Left colon (tissue), 2 donors: ENCODE measurements at regions of chr2 and their contacts with region 1.

Region 1: DNA sequence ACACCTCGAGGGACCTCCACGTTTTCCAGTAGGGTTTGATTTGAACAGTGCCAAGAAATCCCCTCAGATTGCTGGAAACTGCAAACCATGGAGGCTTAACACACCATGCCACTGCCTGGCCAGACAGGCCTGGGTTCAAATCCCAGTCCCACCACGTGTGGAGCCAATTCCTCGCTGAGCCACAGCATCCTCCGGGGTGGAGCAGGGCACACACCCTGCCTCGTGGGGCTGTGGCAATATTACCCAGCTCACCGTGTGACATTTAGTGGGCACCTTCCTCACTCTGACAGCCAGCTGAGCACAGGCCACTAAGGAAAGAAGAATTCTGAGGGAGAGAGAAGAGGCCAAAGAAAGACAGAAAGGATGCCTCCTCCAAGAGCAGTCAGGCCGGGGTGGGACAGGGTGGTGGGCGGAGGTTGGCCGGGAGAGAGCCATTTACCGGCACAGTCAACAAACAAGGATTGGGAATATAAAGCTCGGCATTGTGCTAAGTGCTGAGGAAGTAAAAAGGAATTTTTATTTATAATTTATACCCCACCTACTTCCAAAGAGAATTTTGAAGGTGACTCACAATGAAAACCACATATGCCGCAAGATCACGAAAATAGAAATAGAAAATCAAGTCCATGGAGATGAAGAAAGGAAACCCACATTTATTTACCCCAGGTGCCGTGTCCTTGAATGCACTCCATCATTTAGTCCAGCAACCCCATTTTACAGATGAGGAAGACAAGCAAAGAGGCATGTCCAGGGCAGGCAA is 111.5 kb downstream of the MCFD2 start:
- DNase-seq: no peak
- ATAC-seq: peak; percentile 35

Region 2: GRCh38 chr2:46876741-46877384 is 72.8 kb after region 1 on chr2:
- intact Hi-C with region 1: loop called in 1 of 2 experiments (anchors 10 kb)
- DNase-seq: peak in 1 of 2 donors; percentile 30
- ATAC-seq: peak; percentile 80

Region 3: DNA sequence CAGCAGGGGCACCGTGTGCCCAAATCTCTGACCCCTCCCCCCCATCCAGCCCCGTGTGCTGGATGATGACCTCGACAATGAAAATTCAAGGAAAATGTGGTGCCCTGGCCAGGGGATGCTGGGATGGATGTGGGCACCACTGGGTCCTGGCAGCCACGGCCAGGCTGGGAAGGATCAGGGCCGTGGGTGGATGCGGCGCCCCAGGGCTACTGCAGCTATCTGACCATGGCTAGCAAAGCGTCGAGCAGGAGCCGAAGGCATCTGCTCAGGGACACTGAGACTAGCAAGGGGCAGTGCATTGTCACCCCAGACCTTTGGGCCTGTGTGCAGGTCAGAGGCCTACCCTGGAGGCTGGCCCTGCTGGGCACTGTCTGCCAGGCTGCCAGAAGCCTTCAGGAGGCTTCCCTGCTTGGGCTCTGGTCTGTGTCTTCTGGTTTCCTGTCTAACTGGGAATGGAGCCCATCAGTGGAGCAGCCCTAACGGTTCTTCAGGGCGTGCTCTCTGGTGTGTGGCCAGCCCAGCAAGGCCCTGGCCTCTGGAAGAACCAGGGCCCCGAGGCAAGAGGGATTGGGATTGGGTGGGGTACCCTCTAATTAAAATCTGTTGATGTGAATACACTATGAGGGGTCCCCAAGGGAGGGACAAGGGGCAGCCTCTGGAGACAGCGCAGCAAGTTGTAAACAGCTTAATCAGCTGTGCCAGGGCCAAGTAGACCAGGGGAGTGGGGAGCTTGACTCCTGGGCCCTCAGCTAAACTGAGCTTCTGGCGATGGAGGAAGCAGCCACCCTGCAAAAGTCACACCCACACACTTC is 253.0 kb after region 1 on chr2:
- intact Hi-C with region 1: no loop called
- DNase-seq: peak in 1 of 2 donors; percentile 67
- ATAC-seq: peak; percentile 7